ENCODE measurements at regions of chr5 and their contacts with region 1.

Region 1: GRCh38 chr5:34533582-34534522 is 122.3 kb upstream of the RAI14 start:
- DNase-seq: peak; percentile 87
- H3K4me3 ChIP-seq: no peak overlapping the region
- H3K27ac ChIP-seq: peak overlapping the region; percentile 96
- H3K27me3 ChIP-seq: no peaks in the 10 kb centered on the region
- CTCF ChIP-seq: no peak

Region 2: GRCh38 chr5:34522599-34523386 is 11.1 kb before region 1 on chr5:
- CTCF ChIA-PET with region 1: interaction called, 21 read pairs
- POLR2A ChIA-PET with region 1: no interaction called
- DNase-seq: peak; percentile 79
- H3K4me3 ChIP-seq: no peak overlapping the region
- H3K27ac ChIP-seq: peak overlapping the region; percentile 54
- H3K27me3 ChIP-seq: no peaks in the 10 kb centered on the region
- CTCF ChIP-seq: peak; percentile 74

Region 3: DNA sequence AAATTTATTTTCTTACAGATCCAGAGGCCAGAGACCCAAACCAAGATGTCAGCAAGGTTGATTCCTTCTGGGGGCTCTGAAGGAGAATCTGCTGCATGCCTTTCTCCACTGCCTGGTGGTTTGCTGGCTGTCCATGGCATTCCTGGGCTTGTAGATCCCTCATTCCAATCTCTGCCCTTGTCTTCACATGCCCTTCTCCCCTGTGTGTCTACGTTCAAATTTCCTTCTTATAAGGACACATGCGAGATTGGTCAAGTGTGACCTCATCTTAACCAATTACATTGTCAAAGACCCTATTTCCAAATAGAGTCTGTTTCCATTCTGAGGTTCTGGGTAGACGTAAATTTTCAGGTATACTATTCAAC is 37.8 kb after region 1 on chr5:
- CTCF ChIA-PET with region 1: no interaction called
- POLR2A ChIA-PET with region 1: interaction called, 10 read pairs
- DNase-seq: no peak
- H3K4me3 ChIP-seq: no peak overlapping the region
- H3K27ac ChIP-seq: peak overlapping the region; percentile 94
- H3K27me3 ChIP-seq: no peaks in the 10 kb centered on the region
- CTCF ChIP-seq: no peak

Region 4: GRCh38 chr5:34582371-34582770 is 48.5 kb after region 1 on chr5:
- CTCF ChIA-PET with region 1: no interaction called
- POLR2A ChIA-PET with region 1: no interaction called
- DNase-seq: no peak
- H3K4me3 ChIP-seq: no peak overlapping the region
- H3K27ac ChIP-seq: no peak overlapping the region
- H3K27me3 ChIP-seq: no peaks in the 10 kb centered on the region
- CTCF ChIP-seq: no peak

Region 5: GRCh38 chr5:34656001-34656699 is 122.3 kb after region 1 on chr5 and contains the start of gene RAI14:
- CTCF ChIA-PET with region 1: no interaction called
- POLR2A ChIA-PET with region 1: interaction called, 18 read pairs
- DNase-seq: peak; percentile 68
- H3K4me3 ChIP-seq: peak within 1 kb of the TSS; percentile 82
- H3K27ac ChIP-seq: peak within 1 kb of the TSS; percentile 98
- H3K27me3 ChIP-seq: no peaks in the 10 kb centered on the region
- CTCF ChIP-seq: no peak
- polyA plus RNA-seq, gene RAI14: 162 and 211 TPM in 2 replicates

Measured in AG04450 (cell line).